Activated CD4-positive, alpha-beta T cell treated with anti-CD3 and anti-CD28 coated beads for 36 hours (primary cell): ENCODE measurements at regions of chr12 and their contacts with region 1.

Region 1: DNA sequence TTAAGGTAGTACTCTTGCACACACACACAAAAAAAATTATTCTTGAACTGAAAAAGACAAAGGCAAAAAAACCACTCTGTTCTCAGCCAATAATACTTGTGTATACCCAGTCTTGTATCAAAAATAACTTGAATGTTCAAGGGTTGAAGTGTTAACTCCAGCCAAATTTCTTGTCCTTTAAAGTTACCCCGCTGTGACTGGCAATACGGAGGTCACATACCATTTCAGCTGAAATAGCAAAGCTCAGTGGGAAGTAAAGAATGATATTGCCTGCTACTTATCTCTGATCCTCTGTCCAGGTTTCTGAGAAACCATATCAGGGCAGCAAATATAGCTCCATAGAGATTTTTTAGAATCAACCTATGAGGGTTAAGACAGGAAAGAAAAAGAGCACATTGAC is 167.4 kb downstream of the C12orf50 start:
- DNase-seq: no peak
- ATAC-seq: no peak
- H3K4me3 Mint-ChIP-seq: no peak overlapping the region
- H3K27ac Mint-ChIP-seq: no peak overlapping the region
- H3K4me1 Mint-ChIP-seq: no peaks in the 10 kb centered on the region
- H3K27me3 Mint-ChIP-seq: no peaks in the 10 kb centered on the region

Region 2: DNA sequence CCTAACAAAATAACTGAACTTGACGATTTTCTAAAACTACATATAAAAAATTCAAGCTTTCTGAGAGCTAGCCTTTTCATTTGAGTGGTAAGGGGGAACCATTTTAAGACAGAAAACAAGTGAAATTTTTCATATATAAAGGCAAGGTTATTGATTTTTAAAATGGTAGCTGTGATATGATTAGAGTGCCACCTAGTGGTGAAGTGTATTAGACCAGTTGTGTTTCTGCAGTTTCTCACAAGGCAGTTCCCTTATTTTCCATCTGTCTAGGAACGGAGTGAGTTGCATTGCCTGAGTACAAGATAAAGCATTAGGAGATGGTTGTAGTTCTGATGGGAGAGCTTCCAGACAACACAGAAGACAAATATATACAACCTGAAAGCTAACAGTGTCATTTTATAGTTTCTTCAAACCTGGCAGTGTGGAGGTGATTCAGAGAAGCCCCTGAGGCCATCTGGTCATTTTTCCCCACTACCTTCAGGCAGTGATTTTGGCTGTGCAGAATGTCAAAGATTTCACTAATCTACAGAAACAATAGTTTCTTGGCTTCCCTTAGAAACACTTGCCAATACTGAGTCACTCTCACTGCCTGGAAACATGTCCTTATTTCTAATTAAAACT is 13.4 kb before region 1 on chr12:
- CTCF ChIA-PET with region 1: interaction called, 10 read pairs
- POLR2A ChIA-PET with region 1: no interaction called
- intact Hi-C with region 1: no loop called
- DNase-seq: no peak
- ATAC-seq: no peak
- H3K4me3 Mint-ChIP-seq: no peak overlapping the region
- H3K27ac Mint-ChIP-seq: no peak overlapping the region
- H3K4me1 Mint-ChIP-seq: no peaks in the 10 kb centered on the region
- H3K27me3 Mint-ChIP-seq: peaks cover 6% of the 10 kb centered on the region